Endothelial cell of umbilical vein (primary cell): ENCODE measurements at regions of chr6 and their contacts with region 1.

Region 1: GRCh38 chr6:36131511-36132245 is 1.4 kb downstream of the MAPK13 start:
- DNase-seq: peak; percentile 99
- H3K4me3 ChIP-seq: no peak overlapping the region
- H3K27ac ChIP-seq: peak overlapping the region; percentile 71
- H3K4me1 ChIP-seq: peaks cover 45% of the 10 kb centered on the region
- H3K27me3 ChIP-seq: no peaks in the 10 kb centered on the region
- CTCF ChIP-seq: no peak
- POLR2A ChIP-seq: peak; percentile 66

Region 2: DNA sequence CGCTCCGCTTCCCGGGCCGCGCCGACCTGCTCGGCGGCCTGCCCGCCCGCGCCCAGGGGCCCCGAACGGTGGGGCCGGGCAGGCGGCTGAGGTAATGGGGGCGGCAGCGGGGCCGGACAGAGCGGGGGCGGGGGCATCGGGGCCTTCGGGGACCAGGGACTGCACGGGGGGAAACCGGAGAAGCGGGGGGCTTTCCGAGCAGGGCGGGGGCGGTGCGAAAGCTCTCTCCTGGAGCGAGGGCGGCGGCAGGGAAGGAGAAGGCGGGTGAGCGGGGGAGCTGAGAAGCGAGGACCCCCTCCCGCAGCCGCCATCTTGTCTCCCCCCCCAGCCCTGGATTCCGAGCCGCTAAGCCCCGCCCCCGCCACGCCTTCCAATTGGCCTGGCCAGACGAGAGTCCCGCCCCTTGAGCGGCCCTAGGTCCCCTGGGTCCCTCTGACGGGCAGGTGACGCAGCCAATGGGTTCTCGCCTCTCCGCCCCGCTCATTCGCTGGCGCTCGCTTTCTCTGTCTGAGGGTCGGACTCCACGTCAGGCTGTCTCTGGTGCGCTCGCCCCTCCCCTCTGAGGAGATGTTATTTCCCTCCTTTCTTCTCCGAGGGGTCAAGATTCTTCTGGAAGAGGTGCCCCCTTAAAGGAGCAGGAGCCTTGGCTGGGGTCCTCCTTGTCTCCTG is 65.3 kb after region 1 on chr6:
- CTCF ChIA-PET with region 1: interaction called, 4 read pairs
- POLR2A ChIA-PET with region 1: interaction called, 4 read pairs
- dilution Hi-C with region 1: no loop called
- intact Hi-C with region 1: loop called (anchors 1 kb)
- DNase-seq: peak; percentile 98
- H3K4me3 ChIP-seq: peak overlapping the region; percentile 56 to 90 (median 67)
- H3K27ac ChIP-seq: peak overlapping the region; percentile 83
- H3K4me1 ChIP-seq: peaks cover 12% of the 10 kb centered on the region
- H3K27me3 ChIP-seq: no peaks in the 10 kb centered on the region
- CTCF ChIP-seq: no peak
- POLR2A ChIP-seq: peak; percentile 59